WTC11 (cell line): ENCODE measurements at regions of chr1 and their contacts with region 1.

Region 1: GRCh38 chr1:19651141-19651737 is 7.1 kb downstream of the NBL1 start:
- DNase-seq: peak; percentile 68
- ATAC-seq: peak; percentile 34
- H3K4me3 Mint-ChIP-seq: no peak overlapping the region
- H3K27ac Mint-ChIP-seq: no peak overlapping the region
- H3K4me1 Mint-ChIP-seq: peaks cover 13% of the 10 kb centered on the region
- H3K27me3 Mint-ChIP-seq: peaks cover 7% of the 10 kb centered on the region
- CTCF ChIP-seq: 0 out of 2 replicates have a peak, but pooled peaks have one; percentile 16

Region 2: DNA sequence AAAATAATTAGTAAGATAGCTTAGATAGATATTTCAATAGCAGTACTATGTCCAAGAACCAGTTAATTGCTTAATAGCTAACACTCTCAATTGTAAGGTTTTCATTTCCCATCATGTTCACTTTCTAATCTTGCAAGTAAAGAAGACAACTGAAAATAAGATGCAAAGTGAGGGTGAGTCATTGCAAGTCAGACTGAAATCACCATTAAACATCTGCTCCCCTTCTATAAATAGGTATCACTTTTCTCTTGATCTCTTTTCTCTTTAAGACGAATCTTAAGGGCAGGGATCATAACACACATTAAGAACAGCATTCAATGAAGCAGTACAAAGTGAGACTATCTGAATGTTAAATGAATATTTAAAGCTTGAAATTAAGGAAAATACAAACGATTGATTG is 481.6 kb before region 1 on chr1:
- CTCF ChIA-PET with region 1: no interaction called
- POLR2A ChIA-PET with region 1: no interaction called
- DNase-seq: no peak
- ATAC-seq: no peak
- H3K4me3 Mint-ChIP-seq: no peak overlapping the region
- H3K27ac Mint-ChIP-seq: no peak overlapping the region
- H3K4me1 Mint-ChIP-seq: no peaks in the 10 kb centered on the region
- H3K27me3 Mint-ChIP-seq: no peaks in the 10 kb centered on the region
- CTCF ChIP-seq: no peak

Region 3: GRCh38 chr1:19338323-19338762 is 312.9 kb before region 1 on chr1:
- CTCF ChIA-PET with region 1: interaction called, 11 read pairs
- POLR2A ChIA-PET with region 1: no interaction called
- DNase-seq: peak; percentile 90
- ATAC-seq: peak; percentile 75
- H3K4me3 Mint-ChIP-seq: peak overlapping the region; percentile 56
- H3K27ac Mint-ChIP-seq: peak overlapping the region; percentile 98
- H3K4me1 Mint-ChIP-seq: peaks cover 34% of the 10 kb centered on the region
- H3K27me3 Mint-ChIP-seq: no peaks in the 10 kb centered on the region
- CTCF ChIP-seq: peak; percentile 33; the same call in 1 of the 2 replicates

Region 4: DNA sequence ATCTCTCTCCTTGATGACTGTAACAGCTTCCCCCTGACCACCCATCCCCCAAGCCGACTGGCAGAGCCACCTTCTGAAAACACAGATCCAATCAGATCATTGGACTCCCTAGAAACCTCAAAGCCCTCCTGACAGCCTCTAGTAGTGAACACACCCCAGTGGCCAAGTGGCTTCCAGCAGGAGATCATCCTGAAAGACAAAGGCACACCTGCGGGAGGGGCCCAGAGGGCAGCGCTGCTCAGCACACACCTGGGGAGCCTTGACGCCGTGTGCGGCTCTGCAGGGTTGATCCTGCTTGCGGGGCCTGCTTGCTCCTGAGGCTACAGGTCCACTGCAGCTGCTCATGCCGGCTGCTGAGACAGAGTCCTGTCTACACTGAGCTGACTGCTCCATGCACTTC is 297.6 kb before region 1 on chr1:
- CTCF ChIA-PET with region 1: interaction called, 13 read pairs
- POLR2A ChIA-PET with region 1: no interaction called
- DNase-seq: peak; percentile 79
- ATAC-seq: peak; percentile 94
- H3K4me3 Mint-ChIP-seq: peak overlapping the region; percentile 26; the same call in 1 of the 2 replicates
- H3K27ac Mint-ChIP-seq: peak overlapping the region; percentile 61
- H3K4me1 Mint-ChIP-seq: peaks cover 31% of the 10 kb centered on the region
- H3K27me3 Mint-ChIP-seq: no peaks in the 10 kb centered on the region
- CTCF ChIP-seq: no peak

Region 5: GRCh38 chr1:19390901-19391595 is 260.2 kb before region 1 on chr1:
- CTCF ChIA-PET with region 1: interaction called, 12 read pairs
- POLR2A ChIA-PET with region 1: no interaction called
- DNase-seq: peak; percentile 51
- ATAC-seq: no peak
- H3K4me3 Mint-ChIP-seq: no peak overlapping the region
- H3K27ac Mint-ChIP-seq: peak overlapping the region; percentile 74
- H3K4me1 Mint-ChIP-seq: peaks cover 27% of the 10 kb centered on the region
- H3K27me3 Mint-ChIP-seq: no peaks in the 10 kb centered on the region
- CTCF ChIP-seq: peak; percentile 46

Region 6: GRCh38 chr1:19596714-19597495 is 54.3 kb before region 1 on chr1:
- CTCF ChIA-PET with region 1: interaction called, 12 read pairs
- POLR2A ChIA-PET with region 1: no interaction called
- DNase-seq: peak; percentile 96
- ATAC-seq: peak; percentile 95
- H3K4me3 Mint-ChIP-seq: peak overlapping the region; percentile 99
- H3K27ac Mint-ChIP-seq: peak overlapping the region; percentile 99
- H3K4me1 Mint-ChIP-seq: peaks cover 19% of the 10 kb centered on the region
- H3K27me3 Mint-ChIP-seq: no peaks in the 10 kb centered on the region
- CTCF ChIP-seq: no peak